Ovary (tissue), 10 donors: ENCODE measurements at regions of chr12 and their contacts with region 1.

Region 1: GRCh38 chr12:118061011-118061875 is at the start of gene WSB2:
- DNase-seq: peak; percentile 84 to 89 (median 87)
- H3K4me3 ChIP-seq: peak within 1 kb of the TSS; percentile 88
- H3K27ac ChIP-seq: peak within 1 kb of the TSS; percentile 95 to 98
- H3K4me1 ChIP-seq: peaks cover 10% of the 10 kb centered on the region
- H3K27me3 ChIP-seq: no peaks in the 10 kb centered on the region
- CTCF ChIP-seq: no peak
- EP300 ChIP-seq: no peak
- POLR2A ChIP-seq: no peak
- total RNA-seq, gene WSB2: 16.2 to 40.9 (median 31.9) TPM

Region 2: DNA sequence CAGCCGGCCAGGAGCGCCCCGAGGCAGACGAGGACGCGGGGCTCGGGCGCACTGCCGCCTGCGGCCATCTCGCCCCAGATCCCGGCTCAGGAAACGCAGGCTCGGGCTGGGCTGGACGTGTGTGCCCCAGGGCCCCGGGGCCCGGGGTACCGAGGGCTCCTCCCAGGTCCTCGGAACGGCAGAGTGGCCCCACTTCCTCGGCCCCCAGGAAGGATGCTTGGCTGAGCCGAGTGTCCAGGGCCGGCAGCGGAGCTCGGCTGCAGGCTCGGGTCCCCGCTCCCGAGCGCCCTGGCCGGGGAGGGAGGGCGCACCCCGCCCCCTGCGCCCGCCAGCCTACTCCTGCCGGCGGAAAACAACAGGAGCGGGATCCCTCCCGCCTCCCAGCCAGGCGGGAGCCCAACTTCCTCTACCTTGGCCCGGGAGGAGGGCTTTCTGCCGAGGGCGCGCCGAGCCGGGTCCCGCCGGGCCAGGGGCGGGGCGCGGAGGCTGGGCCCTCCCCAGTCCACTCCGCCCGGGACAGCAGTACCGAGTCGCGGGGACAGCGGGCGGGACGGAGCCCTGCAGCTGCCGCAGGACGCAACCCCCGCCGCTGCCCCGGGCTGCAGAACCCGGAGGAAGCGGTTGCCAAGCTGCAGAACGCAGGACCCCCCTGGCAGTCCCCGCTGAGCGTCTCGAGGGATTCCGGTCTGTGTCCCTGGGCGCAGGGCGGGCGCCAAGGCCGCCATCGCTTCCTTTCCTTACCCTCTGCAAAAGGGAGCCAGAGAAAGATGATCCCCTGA is 42.5 kb after region 1 on chr12 and contains the start of gene VSIG10:
- intact Hi-C with region 1: loop called in 1 of 4 experiments (anchors 5 kb)
- DNase-seq: peak; percentile 64 to 80 (median 68)
- H3K4me3 ChIP-seq: peak within 1 kb of the TSS; percentile 94
- H3K27ac ChIP-seq: peak within 1 kb of the TSS; percentile 78 to 82
- H3K4me1 ChIP-seq: peaks cover 2% of the 10 kb centered on the region
- H3K27me3 ChIP-seq: no peaks in the 10 kb centered on the region
- CTCF ChIP-seq: no peak
- EP300 ChIP-seq: no peak
- POLR2A ChIP-seq: peak; percentile 8
- total RNA-seq, gene VSIG10: 24.7 to 33.6 (median 27.8) TPM

Region 3: GRCh38 chr12:118135788-118136558 is 74.7 kb after region 1 on chr12 and contains the start of gene PEBP1:
- intact Hi-C with region 1: loop called in 1 of 4 experiments (anchors 10 kb)
- DNase-seq: peak; percentile 92 to 96 (median 94)
- H3K4me3 ChIP-seq: peak within 1 kb of the TSS; percentile 78
- H3K27ac ChIP-seq: peak within 1 kb of the TSS; percentile 83 to 92
- H3K4me1 ChIP-seq: peaks cover 14% of the 10 kb centered on the region
- H3K27me3 ChIP-seq: no peaks in the 10 kb centered on the region
- CTCF ChIP-seq: no peak
- EP300 ChIP-seq: no peak
- POLR2A ChIP-seq: peak; percentile 81
- total RNA-seq, gene PEBP1: 265 to 446 (median 274) TPM

Region 4: GRCh38 chr12:119695034-119695433 is 1633.8 kb after region 1 on chr12:
- intact Hi-C with region 1: no loop called
- DNase-seq: no peak
- H3K4me3 ChIP-seq: no peak overlapping the region
- H3K27ac ChIP-seq: no peak overlapping the region
- H3K4me1 ChIP-seq: peaks cover 4% of the 10 kb centered on the region
- H3K27me3 ChIP-seq: no peaks in the 10 kb centered on the region
- CTCF ChIP-seq: no peak
- EP300 ChIP-seq: no peak
- POLR2A ChIP-seq: no peak